ENCODE measurements at regions of chr5 and their contacts with region 1.

Region 1: DNA sequence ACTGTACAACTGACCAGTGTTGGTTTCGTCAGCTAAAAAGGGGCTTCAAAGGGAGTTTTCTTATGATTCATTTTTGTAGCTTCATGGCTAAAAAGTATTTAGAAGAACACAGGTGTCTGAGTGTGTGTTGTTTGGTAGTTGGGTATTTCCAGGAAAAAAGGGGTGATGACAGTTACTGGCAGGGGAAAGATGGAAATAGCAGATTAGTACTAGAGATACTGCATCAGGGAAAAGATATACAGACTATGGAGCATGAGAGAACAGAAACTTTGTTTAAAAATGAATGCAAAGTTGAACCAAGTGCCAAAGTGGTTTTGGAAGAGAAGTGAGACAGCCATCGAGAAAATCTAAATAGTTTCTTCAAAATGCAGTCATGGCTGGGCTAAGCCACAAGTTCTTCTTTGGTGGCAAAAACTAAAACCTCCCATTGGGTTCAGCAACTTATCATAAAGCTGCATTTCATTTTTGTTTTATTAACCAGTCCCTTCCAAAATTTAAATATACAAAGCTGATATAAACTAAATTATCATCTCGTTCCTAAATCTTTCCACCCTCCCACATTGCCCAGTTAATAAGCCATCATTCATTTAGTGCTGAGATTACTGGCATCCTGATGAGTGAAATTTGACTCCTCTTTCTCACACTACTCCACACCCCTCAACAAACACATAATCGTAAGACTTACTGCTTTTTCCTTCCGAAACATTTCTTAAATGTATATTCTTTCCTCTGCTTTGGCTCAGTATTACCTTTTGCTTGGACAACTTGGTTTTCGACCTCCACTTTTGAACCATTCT is 33.5 kb downstream of the ELL2 start:
- DNase-seq: no peak
- H3K4me3 Mint-ChIP-seq: peak overlapping the region; percentile 67
- H3K27ac Mint-ChIP-seq: peak overlapping the region; percentile 89
- H3K4me1 Mint-ChIP-seq: peaks cover 79% of the 10 kb centered on the region
- H3K27me3 Mint-ChIP-seq: no peaks in the 10 kb centered on the region

Region 2: GRCh38 chr5:95909738-95910137 is 18.4 kb before region 1 on chr5:
- intact Hi-C with region 1: loop called (anchors 2 kb)
- DNase-seq: no peak
- H3K4me3 Mint-ChIP-seq: no peak overlapping the region
- H3K27ac Mint-ChIP-seq: no peak overlapping the region
- H3K4me1 Mint-ChIP-seq: peaks cover 27% of the 10 kb centered on the region
- H3K27me3 Mint-ChIP-seq: no peaks in the 10 kb centered on the region

Region 3: GRCh38 chr5:96220610-96221390 is 292.7 kb after region 1 on chr5:
- intact Hi-C with region 1: loop called (anchors 1 kb)
- DNase-seq: no peak
- H3K4me3 Mint-ChIP-seq: no peak overlapping the region
- H3K27ac Mint-ChIP-seq: peak overlapping the region; percentile 81
- H3K4me1 Mint-ChIP-seq: peaks cover 13% of the 10 kb centered on the region
- H3K27me3 Mint-ChIP-seq: peaks cover 1% of the 10 kb centered on the region

Measured in activated T-helper 1 cell treated with anti-CD3 and anti-CD28 coated beads, Interleukin-12 subunit alpha, Interleukin-12 subunit beta, Interleukin-2, Interleukin-4 antibody, amounts not matched to agents 30 ng/mL and 10 ng/mL and 1 ng/mL, durations not matched to agents 14 hours and 24 hours and 36 hours (primary cell).